ENCODE measurements at regions of chr4 and their contacts with region 1.

Region 1: DNA sequence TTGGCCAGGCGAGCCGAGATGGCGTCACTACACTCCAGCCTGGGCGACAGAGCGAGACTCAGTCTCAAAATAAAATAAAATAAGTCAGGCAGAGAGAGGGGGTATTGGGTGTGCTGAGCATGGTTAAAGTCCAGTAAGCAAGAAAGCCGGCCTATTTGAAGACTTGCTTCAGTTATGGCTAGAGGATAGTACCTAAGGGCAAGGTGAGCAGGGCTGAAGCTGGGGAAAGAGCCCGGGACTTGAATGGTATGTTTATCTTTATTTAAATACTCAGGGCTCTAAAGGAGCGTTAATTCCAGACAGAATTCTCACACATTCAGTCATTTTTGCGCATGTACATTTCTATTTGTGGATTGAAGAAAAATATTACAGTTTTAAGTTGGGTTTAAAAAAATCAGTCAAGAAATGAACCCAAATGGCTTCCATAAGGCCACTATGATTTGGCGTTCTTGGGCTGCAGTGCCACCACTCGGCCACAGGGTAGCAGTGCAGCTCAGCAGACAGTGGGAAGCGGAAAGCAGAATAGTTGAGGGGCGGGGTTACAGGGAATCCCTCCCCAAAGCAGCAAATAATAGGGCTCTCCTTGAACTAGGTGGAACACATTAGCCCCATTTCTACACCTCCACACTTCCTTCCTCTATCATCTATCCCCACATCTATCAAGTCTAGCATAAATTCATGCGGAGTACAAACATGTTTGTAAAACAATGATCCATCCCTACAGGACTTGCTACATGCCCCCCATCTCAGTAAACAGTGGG is 37.2 kb upstream of the SH3D19 start:
- DNase-seq: peak; percentile 75
- ATAC-seq: peak; percentile 99
- H3K4me3 ChIP-seq: peak overlapping the region in 1 of 2 experiments; percentile 27; a peak in 2 of 4 replicates
- H3K27ac ChIP-seq: no peak overlapping the region
- H3K4me1 ChIP-seq: no peaks in the 10 kb centered on the region
- H3K27me3 ChIP-seq: no peaks in the 10 kb centered on the region
- CTCF ChIP-seq: peak; percentile 91

Region 2: DNA sequence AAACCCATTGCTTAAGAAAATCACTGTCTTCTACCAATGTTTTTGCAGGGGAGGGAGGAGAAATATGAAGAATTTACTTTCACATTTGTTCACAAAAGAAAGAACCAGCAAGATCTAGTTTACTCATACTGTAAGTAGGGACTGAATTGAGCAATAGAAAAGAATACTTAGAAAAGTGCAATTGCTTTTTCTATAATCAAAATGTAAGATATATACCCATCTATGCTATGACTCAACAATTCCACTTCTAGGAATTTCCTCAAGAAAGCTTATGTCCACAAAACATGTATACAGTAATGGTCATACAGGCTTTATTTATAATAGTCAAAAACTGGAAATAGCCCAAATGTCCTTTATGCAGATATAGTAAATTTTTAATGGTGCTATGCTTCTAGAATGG is 543.9 kb before region 1 on chr4:
- CTCF ChIA-PET with region 1: no interaction called
- POLR2A ChIA-PET with region 1: no interaction called
- in situ Hi-C with region 1: no loop called
- intact Hi-C with region 1: no loop called
- DNase-seq: no peak
- ATAC-seq: no peak
- H3K4me3 ChIP-seq: no peak overlapping the region
- H3K27ac ChIP-seq: no peak overlapping the region
- H3K4me1 ChIP-seq: no peaks in the 10 kb centered on the region
- H3K27me3 ChIP-seq: no peaks in the 10 kb centered on the region
- CTCF ChIP-seq: no peak

Region 3: GRCh38 chr4:151276787-151277562 is 85.6 kb before region 1 on chr4 and contains the start of gene PRSS48:
- CTCF ChIA-PET with region 1: no interaction called
- POLR2A ChIA-PET with region 1: no interaction called
- in situ Hi-C with region 1: no loop called
- intact Hi-C with region 1: loop called (anchors 2 kb)
- DNase-seq: peak; percentile 17
- ATAC-seq: peak; percentile 81; the same call in 1 of the 2 replicates
- H3K4me3 ChIP-seq: no peak within 1 kb of the TSS
- H3K27ac ChIP-seq: no peak within 1 kb of the TSS
- H3K4me1 ChIP-seq: no peaks in the 10 kb centered on the region
- H3K27me3 ChIP-seq: no peaks in the 10 kb centered on the region
- CTCF ChIP-seq: peak; percentile 84
- total RNA-seq, gene PRSS48: not detected

Region 4: GRCh38 chr4:151304755-151305154 is 57.8 kb before region 1 on chr4:
- CTCF ChIA-PET with region 1: no interaction called
- POLR2A ChIA-PET with region 1: no interaction called
- in situ Hi-C with region 1: no loop called
- intact Hi-C with region 1: no loop called
- DNase-seq: no peak
- ATAC-seq: no peak
- H3K4me3 ChIP-seq: no peak overlapping the region
- H3K27ac ChIP-seq: no peak overlapping the region
- H3K4me1 ChIP-seq: no peaks in the 10 kb centered on the region
- H3K27me3 ChIP-seq: no peaks in the 10 kb centered on the region
- CTCF ChIP-seq: no peak